ENCODE measurements at regions of chr19 and their contacts with region 1.

Region 1: DNA sequence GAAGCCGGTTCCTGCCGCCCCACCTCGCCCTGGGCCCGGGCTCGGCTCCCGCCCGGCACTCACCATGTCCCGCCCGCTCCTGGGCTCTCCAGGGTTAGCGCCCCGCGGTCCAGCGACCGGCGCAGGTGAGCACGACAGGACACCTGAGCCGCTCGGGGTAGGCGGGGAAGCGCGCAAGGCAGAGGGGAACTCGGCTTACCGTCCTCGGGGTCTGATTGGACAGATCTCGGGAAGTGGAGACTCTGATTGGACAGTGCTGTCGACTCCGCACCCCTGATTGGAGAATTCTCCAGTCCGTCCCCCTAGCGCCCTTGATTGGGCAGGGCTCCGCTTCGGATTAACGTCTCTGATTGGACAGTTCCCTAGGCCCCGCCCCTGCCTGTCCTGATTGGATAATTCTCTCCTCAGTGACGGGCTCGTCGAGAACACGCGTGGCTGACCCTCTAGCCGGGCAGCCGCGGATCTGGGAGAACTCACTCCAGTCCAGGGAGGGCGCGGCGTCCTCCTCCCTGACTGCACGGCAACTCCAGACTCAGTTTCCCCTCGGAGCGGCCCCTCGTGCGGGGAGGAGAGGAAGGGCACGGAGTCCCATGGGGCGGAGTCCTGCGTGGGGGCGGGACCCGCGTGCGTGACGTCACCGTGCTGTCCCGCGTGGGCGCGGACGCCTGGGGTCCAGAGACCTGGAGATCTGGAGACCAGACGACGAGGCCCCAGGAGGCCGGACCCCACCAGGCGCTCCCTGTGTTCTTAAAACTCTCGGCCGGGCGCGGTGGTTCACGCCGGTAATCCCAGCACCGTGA is at the start of gene ZNF77:
- DNase-seq: peak; percentile 97 to 100
- ATAC-seq: peak; percentile 96 to 100 (median 98)
- H3K4me3 ChIP-seq: peak within 1 kb of the TSS; percentile 73 to 96 (median 82)
- H3K27ac ChIP-seq: peak within 1 kb of the TSS; percentile 48 to 95 (median 90)
- H3K4me1 ChIP-seq: peaks cover 7 to 40% (median 30%) of the 10 kb centered on the region in 9 donors
- H3K27me3 ChIP-seq: no peaks in the 10 kb centered on the region
- CTCF ChIP-seq: peak in 4 of 9 donors; percentile 5 to 22 (median 8)
- total RNA-seq, gene ZNF77: 1.0 to 2.6 (median 2.3) TPM

Region 2: DNA sequence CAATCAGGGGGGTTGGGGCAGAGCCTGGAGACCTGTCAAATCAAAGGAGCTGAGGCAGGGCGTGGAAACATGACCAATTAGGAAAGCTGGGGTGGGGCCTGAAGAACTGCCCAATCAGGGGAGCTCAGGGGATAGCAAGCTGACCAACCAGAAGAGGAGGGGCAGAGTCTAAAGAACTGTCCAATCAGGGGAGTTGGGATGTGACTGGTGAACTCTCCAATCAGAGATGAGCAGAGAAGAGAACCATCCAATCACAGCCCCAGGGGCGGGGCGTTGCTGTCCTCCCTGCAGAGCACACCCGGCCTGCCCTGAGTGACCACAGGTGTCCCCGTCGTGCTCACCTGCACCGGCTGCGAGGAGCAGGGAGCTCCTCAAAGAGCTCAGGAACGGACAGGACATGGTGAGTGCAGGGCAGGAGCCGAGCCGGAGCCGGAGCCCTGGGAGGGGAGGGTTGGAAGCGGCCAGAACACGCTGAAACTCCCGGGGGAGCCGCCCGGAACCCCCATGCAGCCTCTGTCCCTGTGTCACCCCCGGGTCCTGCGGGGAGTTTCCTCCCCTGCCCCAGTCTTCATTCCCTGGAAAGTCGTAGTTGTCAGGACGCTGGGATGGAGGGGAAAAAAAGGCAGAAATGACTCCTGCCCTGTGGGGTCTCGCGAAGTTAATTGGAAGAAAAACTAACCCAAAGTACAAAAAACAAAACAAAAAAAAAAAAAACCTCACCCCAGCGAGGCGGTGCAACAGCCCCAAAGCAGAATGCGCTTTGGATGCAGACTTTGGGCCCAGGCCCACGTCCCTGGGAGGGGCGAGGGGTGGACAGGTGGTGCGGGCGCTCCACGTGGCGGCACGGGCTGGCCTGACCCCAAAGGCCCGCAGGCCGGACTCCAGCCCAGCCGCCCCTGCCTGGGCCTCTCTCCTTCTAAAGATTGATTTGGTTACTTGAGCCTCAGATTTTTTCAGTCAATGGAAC is 77.7 kb before region 1 on chr19 and contains the start of gene ZNF556:
- intact Hi-C with region 1: no loop called
- DNase-seq: no peak
- ATAC-seq: peak in 3 of 8 donors; percentile 35 to 58 (median 42)
- H3K4me3 ChIP-seq: no peak within 1 kb of the TSS
- H3K27ac ChIP-seq: no peak within 1 kb of the TSS
- H3K4me1 ChIP-seq: no peaks in the 10 kb centered on the region
- H3K27me3 ChIP-seq: no peaks in the 10 kb centered on the region
- CTCF ChIP-seq: no peak
- total RNA-seq, gene ZNF556: 0.03 to 0.04 TPM in 2 of 10 donors, not detected in the others

Region 3: DNA sequence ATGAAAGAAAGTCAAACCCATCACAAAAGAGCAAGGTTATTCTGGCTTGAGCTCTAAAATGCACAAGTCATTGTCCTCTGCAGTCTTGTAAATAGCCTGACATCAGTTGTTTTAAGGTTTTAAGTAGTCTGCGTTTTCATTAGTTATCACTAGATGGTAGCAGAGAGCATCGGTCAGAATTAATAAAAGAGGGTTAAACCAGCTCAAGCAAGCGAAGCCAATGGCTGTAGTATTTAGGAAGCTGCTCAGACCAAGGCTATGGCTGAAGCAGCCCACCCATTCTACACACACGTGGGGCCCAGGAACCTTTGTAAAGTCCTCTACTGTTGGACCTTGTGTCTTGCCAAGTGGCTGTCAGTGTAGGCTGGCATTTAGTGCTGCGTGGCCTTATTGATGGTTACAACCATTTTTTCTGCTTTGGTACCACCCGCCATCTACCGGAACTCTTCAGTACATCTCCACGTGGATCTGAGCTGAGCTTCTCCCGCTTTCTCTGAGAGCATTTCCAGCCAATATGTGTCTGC is 57.5 kb before region 1 on chr19:
- intact Hi-C with region 1: loop called in 2 of 10 experiments (anchors 10 kb)
- DNase-seq: no peak
- ATAC-seq: peak; percentile 34 to 78 (median 71)
- H3K4me3 ChIP-seq: no peak overlapping the region
- H3K27ac ChIP-seq: peak overlapping the region in 1 of 10 donors; percentile 12
- H3K4me1 ChIP-seq: peaks cover 0 to 10% (median 4%) of the 10 kb centered on the region in 9 donors
- H3K27me3 ChIP-seq: peaks cover 0 to 3% (median 0%) of the 10 kb centered on the region in 7 donors
- CTCF ChIP-seq: peak; percentile 50 to 76 (median 70)

Region 4: DNA sequence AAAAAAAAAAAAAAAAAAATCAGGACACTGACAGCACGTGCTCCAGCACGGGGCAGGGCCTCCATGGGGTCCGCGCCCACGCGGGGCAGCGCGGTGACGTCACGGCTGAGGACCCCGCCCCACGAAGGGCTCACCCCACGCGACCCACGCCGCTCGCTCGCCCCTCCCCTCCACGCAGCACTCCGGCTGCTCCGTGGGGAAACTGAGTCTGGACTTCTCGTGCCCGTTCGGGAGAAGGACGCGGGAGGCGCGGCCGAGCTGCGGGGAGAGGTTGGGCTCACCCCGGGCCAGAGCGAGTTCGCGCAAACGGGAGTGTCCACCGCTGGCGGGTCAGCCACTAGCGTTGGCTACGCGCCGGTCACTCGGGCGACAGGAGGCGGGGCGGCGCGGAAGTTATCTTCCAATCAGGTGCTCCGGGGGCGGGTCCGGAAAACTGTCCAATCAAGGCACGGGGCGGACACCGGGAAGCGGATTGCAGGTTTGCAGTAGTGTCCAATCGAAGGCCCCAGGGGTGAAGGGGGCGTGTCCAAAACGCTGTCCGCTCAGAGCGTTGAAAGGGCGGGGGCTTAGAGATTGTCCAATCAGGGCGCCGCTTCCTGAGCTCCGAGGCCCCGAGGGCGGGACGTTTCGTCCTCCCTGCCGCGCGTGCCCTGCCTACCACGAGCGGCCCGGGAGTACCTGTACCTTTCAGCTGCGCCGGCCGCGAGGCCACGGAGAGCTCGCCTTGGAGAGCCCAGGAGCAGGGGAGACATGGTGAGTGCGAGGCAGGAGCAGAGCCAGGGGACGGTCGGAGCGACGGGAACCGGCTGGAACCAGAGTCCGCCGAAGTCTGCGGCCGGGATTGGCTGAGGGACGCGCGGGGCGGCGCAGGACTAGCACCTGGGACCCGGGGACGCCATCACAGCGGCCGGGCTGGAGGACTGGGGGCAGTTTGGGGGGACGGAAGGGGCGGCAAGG is 44.4 kb before region 1 on chr19 and contains the start of gene ZNF57:
- intact Hi-C with region 1: loop called in 7 of 10 experiments (anchors 2 to 10 kb)
- DNase-seq: peak; percentile 100
- ATAC-seq: peak; percentile 98 to 100 (median 100)
- H3K4me3 ChIP-seq: peak within 1 kb of the TSS; percentile 54 to 94 (median 68)
- H3K27ac ChIP-seq: peak within 1 kb of the TSS; percentile 31 to 90 (median 81)
- H3K4me1 ChIP-seq: peaks cover 0 to 10% (median 6%) of the 10 kb centered on the region in 9 donors
- H3K27me3 ChIP-seq: no peaks in the 10 kb centered on the region
- CTCF ChIP-seq: no peak
- total RNA-seq, gene ZNF57: 1.0 to 5.5 (median 3.0) TPM

Region 5: DNA sequence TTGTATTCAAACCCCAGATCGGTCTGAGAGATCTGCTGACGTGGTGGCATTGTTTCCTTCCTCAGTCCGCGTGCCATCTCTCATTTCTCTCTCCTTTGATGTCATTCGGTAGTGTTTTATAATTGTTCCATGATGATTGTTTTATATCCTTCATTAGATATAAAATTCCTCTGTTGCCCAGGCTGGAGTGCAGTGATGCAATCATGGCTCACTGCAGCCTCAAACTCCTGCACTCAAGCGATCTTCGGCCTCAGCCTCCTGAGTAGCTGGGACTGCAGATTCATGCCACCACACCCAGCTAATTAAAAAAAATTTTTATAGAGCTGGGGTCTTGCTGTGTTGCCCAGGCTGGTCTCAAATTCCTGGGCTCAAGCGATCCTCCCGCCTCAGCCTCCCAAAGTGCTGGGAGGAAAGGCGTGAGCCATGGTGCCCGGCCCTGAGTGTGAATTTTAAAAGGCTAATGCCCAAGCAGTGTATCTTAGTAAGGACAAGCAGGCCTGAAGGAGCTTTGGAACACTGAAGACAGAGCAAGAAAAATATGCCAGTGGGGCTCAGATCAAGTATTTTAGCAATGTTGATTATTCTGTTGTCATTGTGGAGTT is 39.0 kb before region 1 on chr19:
- intact Hi-C with region 1: loop called in 6 of 10 experiments (anchors 2 to 5 kb)
- DNase-seq: no peak
- ATAC-seq: no peak
- H3K4me3 ChIP-seq: no peak overlapping the region
- H3K27ac ChIP-seq: no peak overlapping the region
- H3K4me1 ChIP-seq: peaks cover 0 to 10% (median 6%) of the 10 kb centered on the region in 9 donors
- H3K27me3 ChIP-seq: no peaks in the 10 kb centered on the region
- CTCF ChIP-seq: no peak

Region 6: DNA sequence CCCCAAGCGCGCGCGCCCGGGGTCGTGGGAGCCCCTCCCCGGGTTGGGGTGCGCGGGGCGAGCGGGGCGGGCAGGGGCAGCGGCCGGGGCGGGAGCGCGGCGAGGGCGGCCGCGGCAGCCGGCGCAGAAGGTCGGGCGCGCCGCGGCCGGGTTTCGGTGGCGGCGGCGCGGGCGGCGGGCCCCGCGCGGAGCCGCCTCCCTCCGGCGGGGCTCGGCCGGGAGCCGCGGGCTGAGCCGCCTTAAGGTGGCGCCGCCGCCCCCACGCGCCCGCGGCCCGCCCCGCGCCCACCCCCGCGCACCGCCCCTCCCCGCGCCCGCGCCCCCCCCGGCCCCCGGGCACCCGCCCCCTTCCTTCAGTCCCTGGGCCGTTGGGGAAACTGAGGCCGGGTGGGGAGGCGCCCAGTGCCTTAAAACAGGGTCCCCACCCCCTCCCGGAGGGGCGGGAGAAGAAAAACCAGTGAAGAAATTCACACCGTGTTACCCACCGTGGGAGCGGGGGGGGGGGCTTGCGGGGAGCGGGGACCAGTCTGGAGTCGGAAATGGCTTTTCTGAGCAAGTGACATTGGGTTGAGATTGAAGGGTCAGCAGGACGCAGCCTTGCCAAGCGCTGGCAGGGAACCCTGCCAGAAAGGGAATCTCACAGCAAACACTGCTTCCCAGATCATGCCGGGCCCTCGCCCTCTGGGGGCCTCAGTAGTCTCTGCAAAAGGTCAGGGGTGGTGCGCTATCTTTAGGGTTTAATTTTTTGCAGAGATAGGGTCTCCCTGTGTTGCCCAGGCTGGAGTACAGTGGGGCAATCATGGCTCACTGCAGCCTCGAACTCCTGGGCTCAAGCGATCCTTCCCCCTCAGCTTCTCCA is 84.3 kb after region 1 on chr19 and contains the start of gene TLE2:
- intact Hi-C with region 1: no loop called
- DNase-seq: no peak
- ATAC-seq: peak in 5 of 8 donors; percentile 40 to 68 (median 44)
- H3K4me3 ChIP-seq: peak within 1 kb of the TSS; percentile 59 to 80 (median 69)
- H3K27ac ChIP-seq: peak within 1 kb of the TSS in 8 of 10 donors; percentile 30 to 85 (median 66)
- H3K4me1 ChIP-seq: peaks cover 0 to 22% (median 13%) of the 10 kb centered on the region in 9 donors
- H3K27me3 ChIP-seq: peaks cover 0 to 59% (median 0%) of the 10 kb centered on the region in 7 donors
- CTCF ChIP-seq: no peak
- total RNA-seq, gene TLE2: 28.2 to 64.5 (median 39.9) TPM